ENCODE measurements at regions of chr17 and their contacts with region 1.

Region 1: DNA sequence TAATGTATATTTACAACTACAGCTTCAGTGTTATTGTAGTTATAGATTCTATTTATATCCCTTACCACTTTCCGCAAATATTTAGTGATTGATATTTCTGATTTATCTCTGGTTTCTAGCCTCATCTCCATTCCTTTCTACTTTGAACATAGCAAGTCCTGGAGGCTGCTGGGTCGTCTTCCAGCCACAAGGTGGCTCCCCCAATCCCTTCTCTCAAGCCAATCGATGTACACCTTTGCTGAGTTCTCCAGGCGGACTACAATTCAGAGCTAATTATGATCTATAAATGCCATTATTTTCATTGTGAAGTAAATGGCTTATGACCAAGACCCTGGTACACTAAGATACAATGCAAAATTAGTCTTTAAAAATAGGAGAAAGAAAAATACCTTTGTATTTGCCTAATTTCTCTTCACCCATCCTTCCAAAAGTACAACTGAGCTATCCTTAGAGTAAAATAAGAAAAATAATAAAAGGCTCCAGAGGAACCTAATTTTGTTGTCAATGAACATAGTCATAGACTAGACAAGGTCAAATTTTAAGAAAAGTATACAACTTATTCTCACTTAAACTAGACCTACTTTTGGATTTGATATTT is 122.1 kb downstream of the SKAP1 start:
- DNase-seq: peak; percentile 8 to 71 (median 39)
- ATAC-seq: peak; percentile 61 to 81 (median 78)
- H3K4me3 ChIP-seq: no peak overlapping the region
- H3K4me3 Mint-ChIP-seq: no peak overlapping the region
- H3K27ac ChIP-seq: no peak overlapping the region
- H3K27ac Mint-ChIP-seq: no peak overlapping the region
- H3K4me1 ChIP-seq: no peaks in the 10 kb centered on the region
- H3K4me1 Mint-ChIP-seq: peaks cover 12 to 37% (median 26%) of the 10 kb centered on the region in 3 donors
- H3K27me3 ChIP-seq: no peaks in the 10 kb centered on the region
- H3K27me3 Mint-ChIP-seq: no peaks in the 10 kb centered on the region

Region 2: DNA sequence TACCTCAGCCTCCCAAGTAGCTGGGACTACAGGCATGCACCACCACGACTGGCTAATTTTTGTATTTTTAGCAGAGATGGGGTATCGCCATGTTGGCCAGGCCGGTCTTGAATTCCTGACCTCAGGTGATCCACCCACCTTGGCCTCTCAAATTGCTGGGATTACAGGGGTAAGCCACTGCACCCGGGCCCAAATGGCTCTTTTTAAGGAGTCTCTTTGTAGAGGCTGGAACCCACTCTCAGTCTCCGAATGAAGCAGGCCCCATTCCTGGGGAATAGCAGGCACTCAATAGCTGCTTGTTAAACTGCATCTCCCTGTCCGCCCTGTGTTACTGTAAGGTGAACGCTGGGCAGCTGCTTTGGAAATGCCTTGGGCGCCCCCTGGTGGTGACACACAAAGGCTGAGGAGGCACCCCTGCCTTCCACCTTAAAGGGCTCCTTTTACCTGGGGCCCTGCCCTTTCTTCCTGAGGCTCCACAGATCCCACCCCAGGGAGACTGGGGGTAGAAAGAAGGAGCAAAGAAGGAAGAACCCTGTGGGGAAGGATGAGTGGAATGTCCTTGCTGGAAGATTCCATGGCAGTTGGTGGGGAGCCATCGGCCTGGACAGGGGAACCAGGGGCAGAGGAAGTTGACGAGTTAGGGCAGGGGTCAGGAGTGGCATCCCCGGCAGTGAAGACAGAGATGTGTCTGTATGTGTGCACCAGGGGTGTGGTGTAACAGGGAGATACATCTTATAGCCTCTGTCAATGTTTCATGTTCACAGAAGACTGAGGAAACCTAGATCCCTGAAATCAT is 418.0 kb before region 1 on chr17:
- CTCF ChIA-PET with region 1: no interaction called
- POLR2A ChIA-PET with region 1: no interaction called
- DNase-seq: peak; percentile 71 to 95 (median 87)
- ATAC-seq: peak; percentile 93 to 97 (median 96)
- H3K4me3 ChIP-seq: no peak overlapping the region
- H3K4me3 Mint-ChIP-seq: no peak overlapping the region
- H3K27ac ChIP-seq: no peak overlapping the region
- H3K27ac Mint-ChIP-seq: peak overlapping the region in 1 of 2 donors; percentile 49
- H3K4me1 ChIP-seq: peaks cover 12 to 19% of the 10 kb centered on the region in 2 experiments
- H3K4me1 Mint-ChIP-seq: peaks cover 26 to 31% (median 29%) of the 10 kb centered on the region in 3 donors
- H3K27me3 ChIP-seq: peaks cover 0 to 8% of the 10 kb centered on the region in 2 experiments
- H3K27me3 Mint-ChIP-seq: no peaks in the 10 kb centered on the region

Region 3: DNA sequence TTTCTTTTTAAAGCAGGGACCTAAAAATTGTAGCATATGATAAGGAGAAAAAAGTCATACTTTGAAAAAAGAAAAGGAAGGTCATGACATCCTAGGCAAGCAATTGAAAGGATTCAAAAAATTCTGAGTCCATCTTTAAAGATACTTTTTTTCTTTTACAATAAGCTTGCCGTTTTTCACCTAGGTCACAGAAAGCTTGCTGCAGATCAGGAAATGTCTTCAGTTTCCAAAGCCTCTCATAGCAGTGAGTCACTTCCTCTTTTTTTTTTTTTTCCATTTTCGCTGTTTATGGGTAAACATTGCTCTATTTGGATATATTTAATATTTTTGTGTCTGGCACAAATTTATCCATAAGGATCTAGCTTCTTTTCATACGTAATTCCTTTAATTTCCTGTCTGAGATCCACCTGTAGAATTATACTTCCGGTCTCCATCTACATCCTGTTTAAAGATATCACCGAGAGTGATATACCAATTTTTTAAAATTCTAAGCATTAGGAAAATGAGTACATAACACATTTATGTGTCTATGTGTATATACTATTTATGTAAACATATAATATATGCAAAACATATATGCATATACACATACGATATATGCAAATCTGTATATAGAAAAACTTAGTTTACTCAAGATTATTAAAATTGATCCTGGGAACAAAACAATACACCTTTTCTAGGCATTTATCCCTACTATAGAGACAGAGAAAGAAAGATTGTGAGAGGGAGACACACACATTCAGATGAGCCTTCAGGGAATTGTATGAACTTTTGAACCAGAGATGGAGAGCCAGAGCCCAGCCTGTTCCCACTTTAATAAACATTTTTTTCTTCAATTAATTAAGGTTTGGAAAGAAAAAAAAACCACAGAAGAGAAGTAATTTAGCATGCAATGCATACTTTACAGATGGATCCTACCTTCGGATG is 12.3 kb before region 1 on chr17:
- CTCF ChIA-PET with region 1: interaction called in 1 of 2 experiments, 11 read pairs
- POLR2A ChIA-PET with region 1: no interaction called
- DNase-seq: peak in 1 of 35 experiments; percentile 60
- ATAC-seq: peak; percentile 66 to 74 (median 68)
- H3K4me3 ChIP-seq: peak overlapping the region in 1 of 2 donors; percentile 16
- H3K4me3 Mint-ChIP-seq: peak overlapping the region; percentile 55 to 82 (median 67)
- H3K27ac ChIP-seq: peak overlapping the region; percentile 82
- H3K27ac Mint-ChIP-seq: peak overlapping the region; percentile 90 to 98
- H3K4me1 ChIP-seq: peaks cover 4 to 26% of the 10 kb centered on the region in 2 experiments
- H3K4me1 Mint-ChIP-seq: peaks cover 56 to 72% (median 71%) of the 10 kb centered on the region in 3 donors
- H3K27me3 ChIP-seq: no peaks in the 10 kb centered on the region
- H3K27me3 Mint-ChIP-seq: no peaks in the 10 kb centered on the region

Region 4: DNA sequence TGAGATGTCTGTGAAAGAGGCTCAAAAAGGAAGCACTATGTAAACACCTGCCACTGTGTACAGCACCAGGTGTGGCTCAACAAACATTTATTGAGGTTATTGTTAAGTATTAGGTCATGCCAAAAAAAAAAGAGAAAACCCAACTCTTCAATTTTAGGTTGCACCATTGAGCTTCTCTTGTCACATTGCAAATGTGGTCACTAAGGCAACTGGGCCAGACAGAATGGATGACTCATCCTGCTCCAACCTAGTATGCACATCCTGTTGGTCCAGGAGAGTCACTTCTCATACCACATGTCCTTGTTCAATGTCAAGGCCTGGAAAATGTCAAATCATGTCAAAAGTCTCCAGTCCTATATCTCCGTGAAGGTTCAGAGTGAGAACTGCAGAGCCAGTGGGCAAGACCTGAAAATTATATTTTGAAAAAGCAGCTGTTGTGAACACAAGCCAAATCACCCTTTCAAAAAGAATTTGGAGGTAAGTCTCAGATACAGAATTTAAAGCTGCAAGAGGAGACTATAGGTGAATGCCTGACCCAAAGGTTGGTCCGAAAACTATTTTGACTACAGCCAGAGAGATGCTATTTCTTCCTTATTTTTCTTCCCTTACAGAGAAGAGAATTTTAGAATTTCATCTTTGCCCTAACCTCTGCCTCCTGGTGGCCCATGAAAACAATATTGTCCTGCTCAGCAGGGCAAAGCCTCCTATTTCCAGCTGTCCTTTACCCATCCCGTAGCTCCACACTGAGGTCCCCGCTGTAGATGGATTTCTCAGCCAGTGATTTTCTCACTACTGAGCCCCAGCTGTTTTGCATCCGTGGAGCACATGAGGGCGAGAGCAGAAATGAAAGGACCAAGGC is 198.1 kb after region 1 on chr17:
- CTCF ChIA-PET with region 1: interaction called in 1 of 2 experiments, 10 read pairs
- POLR2A ChIA-PET with region 1: no interaction called
- DNase-seq: peak in 20 of 35 experiments; percentile 10 to 71 (median 27)
- ATAC-seq: peak; percentile 81 to 93 (median 92)
- H3K4me3 ChIP-seq: no peak overlapping the region
- H3K4me3 Mint-ChIP-seq: no peak overlapping the region
- H3K27ac ChIP-seq: peak overlapping the region; percentile 75
- H3K27ac Mint-ChIP-seq: peak overlapping the region in 1 of 2 donors; percentile 76
- H3K4me1 ChIP-seq: peaks cover 0 to 8% of the 10 kb centered on the region in 2 experiments
- H3K4me1 Mint-ChIP-seq: peaks cover 5 to 33% (median 19%) of the 10 kb centered on the region in 3 donors
- H3K27me3 ChIP-seq: peaks cover 0 to 6% of the 10 kb centered on the region in 2 experiments
- H3K27me3 Mint-ChIP-seq: peaks cover 0 to 14% of the 10 kb centered on the region in 2 donors

Measured in T-cell (primary cell).